ENCODE measurements at regions of chr15 and their contacts with region 1.

Region 1: GRCh38 chr15:34241372-34242330 is 16.8 kb downstream of the EMC4 start:
- DNase-seq: peak in 5 of 9 experiments; percentile 28 to 74 (median 31)
- ATAC-seq: peak; percentile 93
- H3K4me3 ChIP-seq: no peak overlapping the region
- H3K4me3 Mint-ChIP-seq: no peak overlapping the region
- H3K27ac ChIP-seq: no peak overlapping the region
- H3K27ac Mint-ChIP-seq: no peak overlapping the region
- H3K4me1 ChIP-seq: no peaks in the 10 kb centered on the region
- H3K4me1 Mint-ChIP-seq: peaks cover 3% of the 10 kb centered on the region
- H3K27me3 ChIP-seq: no peaks in the 10 kb centered on the region
- H3K27me3 Mint-ChIP-seq: no peaks in the 10 kb centered on the region
- CTCF ChIP-seq: peak; percentile 95

Region 2: GRCh38 chr15:34188711-34189110 is 52.9 kb before region 1 on chr15:
- CTCF ChIA-PET with region 1: no interaction called
- POLR2A ChIA-PET with region 1: no interaction called
- intact Hi-C with region 1: no loop called
- DNase-seq: no peak
- ATAC-seq: no peak
- H3K4me3 ChIP-seq: no peak overlapping the region
- H3K4me3 Mint-ChIP-seq: no peak overlapping the region
- H3K27ac ChIP-seq: no peak overlapping the region
- H3K27ac Mint-ChIP-seq: no peak overlapping the region
- H3K4me1 ChIP-seq: no peaks in the 10 kb centered on the region
- H3K4me1 Mint-ChIP-seq: peaks cover 26% of the 10 kb centered on the region
- H3K27me3 ChIP-seq: no peaks in the 10 kb centered on the region
- H3K27me3 Mint-ChIP-seq: no peaks in the 10 kb centered on the region
- CTCF ChIP-seq: no peak

Region 3: DNA sequence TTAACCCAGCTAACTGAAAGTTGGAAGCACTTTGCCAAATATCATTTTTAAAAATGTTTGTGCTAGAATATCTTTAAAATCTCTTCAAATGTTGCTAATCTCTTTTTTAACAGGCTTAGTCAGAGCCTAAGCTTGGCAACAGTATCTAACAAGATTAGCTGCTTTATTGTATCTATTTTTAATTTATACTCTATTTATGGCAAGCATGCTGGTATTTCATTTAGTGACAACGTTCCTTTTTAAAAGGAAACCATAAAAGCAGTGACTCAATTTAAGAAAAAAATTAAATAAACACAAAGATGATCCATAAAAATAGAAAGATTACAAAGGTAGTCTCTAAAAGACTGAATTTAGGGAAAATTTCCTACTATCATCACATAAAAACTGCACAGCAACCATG is 55.4 kb after region 1 on chr15:
- CTCF ChIA-PET with region 1: no interaction called
- POLR2A ChIA-PET with region 1: no interaction called
- intact Hi-C with region 1: loop called in 1 of 2 experiments (anchors 5 kb)
- DNase-seq: no peak
- ATAC-seq: no peak
- H3K4me3 ChIP-seq: no peak overlapping the region
- H3K4me3 Mint-ChIP-seq: no peak overlapping the region
- H3K27ac ChIP-seq: no peak overlapping the region
- H3K27ac Mint-ChIP-seq: peak overlapping the region; percentile 58
- H3K4me1 ChIP-seq: peaks cover 20% of the 10 kb centered on the region
- H3K4me1 Mint-ChIP-seq: peaks cover 55% of the 10 kb centered on the region
- H3K27me3 ChIP-seq: no peaks in the 10 kb centered on the region
- H3K27me3 Mint-ChIP-seq: no peaks in the 10 kb centered on the region
- CTCF ChIP-seq: no peak

Region 4: GRCh38 chr15:34331809-34332208 is 90.2 kb after region 1 on chr15:
- CTCF ChIA-PET with region 1: interaction called, 13 read pairs
- POLR2A ChIA-PET with region 1: no interaction called
- intact Hi-C with region 1: no loop called
- DNase-seq: peak in 2 of 9 experiments; percentile 61 to 74
- ATAC-seq: peak; percentile 64
- H3K4me3 ChIP-seq: no peak overlapping the region
- H3K4me3 Mint-ChIP-seq: peak overlapping the region; percentile 23
- H3K27ac ChIP-seq: peak overlapping the region in 1 of 2 experiments; percentile 62
- H3K27ac Mint-ChIP-seq: peak overlapping the region; percentile 80
- H3K4me1 ChIP-seq: peaks cover 86% of the 10 kb centered on the region
- H3K4me1 Mint-ChIP-seq: peaks cover 83% of the 10 kb centered on the region
- H3K27me3 ChIP-seq: no peaks in the 10 kb centered on the region
- H3K27me3 Mint-ChIP-seq: no peaks in the 10 kb centered on the region
- CTCF ChIP-seq: no peak

Region 5: GRCh38 chr15:34342737-34343575 is 101.3 kb after region 1 on chr15 and contains the starts of genes NOP10 and NUTM1:
- CTCF ChIA-PET with region 1: interaction called, 11 read pairs
- POLR2A ChIA-PET with region 1: interaction called, 9 read pairs
- intact Hi-C with region 1: no loop called
- DNase-seq: peak; percentile 87 to 96 (median 93)
- ATAC-seq: peak; percentile 83
- H3K4me3 ChIP-seq: peak within 1 kb of the TSS; percentile 88 to 90
- H3K4me3 Mint-ChIP-seq: no peak within 1 kb of the TSS
- H3K27ac ChIP-seq: peak within 1 kb of the TSS; percentile 82 to 90
- H3K27ac Mint-ChIP-seq: peak within 1 kb of the TSS; percentile 85
- H3K4me1 ChIP-seq: peaks cover 20% of the 10 kb centered on the region
- H3K4me1 Mint-ChIP-seq: peaks cover 24% of the 10 kb centered on the region
- H3K27me3 ChIP-seq: no peaks in the 10 kb centered on the region
- H3K27me3 Mint-ChIP-seq: no peaks in the 10 kb centered on the region
- CTCF ChIP-seq: peak; percentile 90
- total RNA-seq, gene NOP10: 36.6 to 40.1 TPM
- total RNA-seq, gene NUTM1: not detected

Region 6: GRCh38 chr15:34360310-34360709 is 118.7 kb after region 1 on chr15:
- CTCF ChIA-PET with region 1: interaction called, 17 read pairs
- POLR2A ChIA-PET with region 1: no interaction called
- intact Hi-C with region 1: no loop called
- DNase-seq: no peak
- ATAC-seq: no peak
- H3K4me3 ChIP-seq: no peak overlapping the region
- H3K4me3 Mint-ChIP-seq: no peak overlapping the region
- H3K27ac ChIP-seq: no peak overlapping the region
- H3K27ac Mint-ChIP-seq: no peak overlapping the region
- H3K4me1 ChIP-seq: peaks cover 4% of the 10 kb centered on the region
- H3K4me1 Mint-ChIP-seq: peaks cover 9% of the 10 kb centered on the region
- H3K27me3 ChIP-seq: no peaks in the 10 kb centered on the region
- H3K27me3 Mint-ChIP-seq: no peaks in the 10 kb centered on the region
- CTCF ChIP-seq: no peak

Region 7: DNA sequence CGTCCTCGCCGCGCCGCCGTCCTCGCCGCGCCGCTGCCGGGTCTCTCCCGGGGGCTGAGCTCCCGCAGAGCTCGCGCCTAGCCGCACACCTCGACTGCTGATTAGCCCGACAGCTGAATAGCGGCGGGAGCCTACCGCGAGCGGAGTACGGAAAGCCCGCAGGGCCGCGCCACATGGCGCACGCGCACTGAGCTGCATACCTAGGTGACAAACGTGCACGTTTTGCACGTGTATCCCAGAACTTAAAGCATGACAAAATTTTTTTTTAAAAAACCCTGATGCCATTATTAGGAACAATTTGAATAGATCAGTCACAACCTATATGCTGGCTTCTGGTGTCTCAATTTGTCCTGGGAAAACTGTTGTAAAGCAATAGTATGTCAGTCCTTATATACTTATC is 196.0 kb after region 1 on chr15 and contains the start of gene GOLGA8A:
- CTCF ChIA-PET with region 1: no interaction called
- POLR2A ChIA-PET with region 1: no interaction called
- intact Hi-C with region 1: loop called in 1 of 2 experiments (anchors 5 kb)
- DNase-seq: peak; percentile 49 to 88 (median 82)
- ATAC-seq: peak; percentile 82
- H3K4me3 ChIP-seq: peak within 1 kb of the TSS; percentile 47 to 73
- H3K4me3 Mint-ChIP-seq: peak within 1 kb of the TSS; percentile 96
- H3K27ac ChIP-seq: peak within 1 kb of the TSS in 1 of 2 experiments; percentile 27
- H3K27ac Mint-ChIP-seq: peak within 1 kb of the TSS; percentile 90
- H3K4me1 ChIP-seq: peaks cover 11% of the 10 kb centered on the region
- H3K4me1 Mint-ChIP-seq: peaks cover 24% of the 10 kb centered on the region
- H3K27me3 ChIP-seq: no peaks in the 10 kb centered on the region
- H3K27me3 Mint-ChIP-seq: peaks cover 2% of the 10 kb centered on the region
- CTCF ChIP-seq: no peak
- total RNA-seq, gene GOLGA8A: 199 to 214 TPM

Region 8: DNA sequence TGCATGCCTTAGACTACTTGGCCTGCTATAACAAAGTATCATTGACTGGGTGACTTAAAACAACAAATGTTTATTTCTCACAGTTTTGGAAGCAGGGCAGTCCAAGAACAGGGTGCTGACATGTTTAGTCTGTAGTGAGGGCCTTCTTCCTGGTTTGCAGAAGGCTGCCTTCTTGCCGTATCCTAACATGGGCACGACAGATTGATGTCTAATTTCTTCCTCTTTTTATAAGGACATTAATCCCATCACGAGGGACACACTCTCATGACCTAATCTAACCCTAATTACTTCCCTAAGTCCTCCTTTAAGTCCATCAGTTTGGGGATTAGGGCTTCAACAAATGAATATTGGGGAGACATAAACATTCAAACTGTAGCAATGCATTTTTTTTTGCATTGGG is 352.7 kb after region 1 on chr15:
- CTCF ChIA-PET with region 1: no interaction called
- POLR2A ChIA-PET with region 1: no interaction called
- intact Hi-C with region 1: loop called (anchors 5 kb)
- DNase-seq: no peak
- ATAC-seq: no peak
- H3K4me3 ChIP-seq: no peak overlapping the region
- H3K4me3 Mint-ChIP-seq: no peak overlapping the region
- H3K27ac ChIP-seq: no peak overlapping the region
- H3K27ac Mint-ChIP-seq: no peak overlapping the region
- H3K4me1 ChIP-seq: no peaks in the 10 kb centered on the region
- H3K4me1 Mint-ChIP-seq: no peaks in the 10 kb centered on the region
- H3K27me3 ChIP-seq: no peaks in the 10 kb centered on the region
- H3K27me3 Mint-ChIP-seq: peaks cover 10% of the 10 kb centered on the region
- CTCF ChIP-seq: no peak

Region 9: GRCh38 chr15:34768518-34768917 is 526.9 kb after region 1 on chr15:
- CTCF ChIA-PET with region 1: no interaction called
- POLR2A ChIA-PET with region 1: no interaction called
- intact Hi-C with region 1: no loop called
- DNase-seq: no peak
- ATAC-seq: no peak
- H3K4me3 ChIP-seq: no peak overlapping the region
- H3K4me3 Mint-ChIP-seq: no peak overlapping the region
- H3K27ac ChIP-seq: no peak overlapping the region
- H3K27ac Mint-ChIP-seq: no peak overlapping the region
- H3K4me1 ChIP-seq: no peaks in the 10 kb centered on the region
- H3K4me1 Mint-ChIP-seq: no peaks in the 10 kb centered on the region
- H3K27me3 ChIP-seq: no peaks in the 10 kb centered on the region
- H3K27me3 Mint-ChIP-seq: peaks cover 11% of the 10 kb centered on the region
- CTCF ChIP-seq: no peak

Measured in CD8-positive, alpha-beta T cell (primary cell).